PC-9 (cell line): ENCODE measurements at regions of chr6 and their contacts with region 1.

Region 1: DNA sequence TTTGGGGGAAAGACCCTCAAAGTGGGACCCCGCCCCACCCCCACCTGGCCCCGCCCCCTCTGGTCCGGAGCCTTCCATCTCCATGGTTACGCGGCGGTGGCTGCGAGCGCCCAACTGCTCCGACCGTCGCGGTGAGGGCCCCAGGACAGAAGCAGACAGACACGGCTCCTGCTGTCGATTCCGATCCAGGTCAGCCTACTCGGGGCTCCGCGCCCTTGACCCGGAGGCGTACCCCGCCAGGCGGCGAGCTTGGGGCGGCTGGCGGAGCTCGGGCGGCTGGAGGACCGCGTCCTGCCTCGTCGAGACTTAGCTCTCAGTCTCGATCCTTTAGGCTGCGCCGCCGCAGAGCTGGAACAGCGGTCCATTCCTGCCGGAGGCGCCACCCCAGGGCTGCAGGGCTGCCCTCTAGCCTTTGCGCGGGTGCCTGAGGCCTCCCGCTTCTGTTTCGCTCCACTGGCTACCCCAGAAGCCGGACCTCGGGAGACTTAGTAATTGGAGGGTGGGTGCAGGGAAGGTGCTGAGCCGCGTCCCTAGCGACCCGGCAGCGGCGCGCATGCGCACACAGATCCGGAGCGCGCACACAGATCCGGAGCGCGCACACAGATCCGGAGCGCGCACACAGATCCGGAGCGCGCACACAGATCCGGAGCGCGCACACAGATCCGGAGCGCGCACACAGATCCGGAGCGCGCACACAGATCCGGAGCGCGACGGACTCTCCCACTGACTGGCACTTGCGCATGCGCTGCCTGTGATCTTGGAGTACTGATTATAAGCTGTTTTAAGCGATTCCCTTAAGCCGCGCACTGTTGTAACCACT is at the start of gene CFAP206:
- DNase-seq: peak; percentile 67 to 79
- H3K4me3 ChIP-seq: peak within 1 kb of the TSS; percentile 94
- H3K27ac ChIP-seq: peak within 1 kb of the TSS; percentile 34; the same call in 1 of the 2 replicates
- H3K4me1 ChIP-seq: 0 out of 2 replicates have a peak, but pooled peaks cover 6% of the 10 kb centered on the region
- H3K27me3 ChIP-seq: no peaks in the 10 kb centered on the region
- CTCF ChIP-seq: no peak
- total RNA-seq, gene CFAP206: 2.9 and 3.2 TPM in 2 replicates

Region 2: GRCh38 chr6:87421575-87421974 is 13.5 kb after region 1 on chr6:
- CTCF ChIA-PET with region 1: no interaction called
- POLR2A ChIA-PET with region 1: no interaction called
- intact Hi-C with region 1: loop called (anchors 1 kb)
- DNase-seq: peak; percentile 41 to 92
- H3K4me3 ChIP-seq: peak overlapping the region; percentile 31; the same call in 1 of the 2 replicates
- H3K27ac ChIP-seq: peak overlapping the region; percentile 65
- H3K4me1 ChIP-seq: peaks cover 9% of the 10 kb centered on the region
- H3K27me3 ChIP-seq: no peaks in the 10 kb centered on the region
- CTCF ChIP-seq: no peak

Region 3: GRCh38 chr6:87430499-87430898 is 22.4 kb after region 1 on chr6:
- CTCF ChIA-PET with region 1: no interaction called
- POLR2A ChIA-PET with region 1: interaction called, 10 read pairs
- intact Hi-C with region 1: no loop called
- DNase-seq: no peak
- H3K4me3 ChIP-seq: no peak overlapping the region
- H3K27ac ChIP-seq: no peak overlapping the region
- H3K4me1 ChIP-seq: no peaks in the 10 kb centered on the region
- H3K27me3 ChIP-seq: no peaks in the 10 kb centered on the region
- CTCF ChIP-seq: no peak

Region 4: GRCh38 chr6:87494761-87495422 is 86.8 kb after region 1 on chr6:
- CTCF ChIA-PET with region 1: no interaction called
- POLR2A ChIA-PET with region 1: no interaction called
- intact Hi-C with region 1: no loop called
- DNase-seq: no peak
- H3K4me3 ChIP-seq: no peak overlapping the region
- H3K27ac ChIP-seq: no peak overlapping the region
- H3K4me1 ChIP-seq: no peaks in the 10 kb centered on the region
- H3K27me3 ChIP-seq: no peaks in the 10 kb centered on the region
- CTCF ChIP-seq: no peak

Region 5: GRCh38 chr6:87608802-87609201 is 200.7 kb after region 1 on chr6:
- CTCF ChIA-PET with region 1: no interaction called
- POLR2A ChIA-PET with region 1: no interaction called
- intact Hi-C with region 1: no loop called
- DNase-seq: no peak
- H3K4me3 ChIP-seq: no peak overlapping the region
- H3K27ac ChIP-seq: no peak overlapping the region
- H3K4me1 ChIP-seq: no peaks in the 10 kb centered on the region
- H3K27me3 ChIP-seq: no peaks in the 10 kb centered on the region
- CTCF ChIP-seq: no peak